ENCODE measurements at regions of chr14 and their contacts with region 1.

Region 1: GRCh38 chr14:25044106-25044698 is 5.7 kb downstream of the STXBP6 start:
- DNase-seq: no peak
- ATAC-seq: no peak
- H3K4me3 ChIP-seq: no peak overlapping the region
- H3K27ac ChIP-seq: no peak overlapping the region
- H3K4me1 ChIP-seq: no peaks in the 10 kb centered on the region
- H3K27me3 ChIP-seq: peaks cover 4% of the 10 kb centered on the region; the same call in 1 of the 2 replicates
- CTCF ChIP-seq: no peak

Region 2: GRCh38 chr14:23494223-23494622 is 1550.0 kb before region 1 on chr14:
- CTCF ChIA-PET with region 1: interaction called, 10 read pairs
- POLR2A ChIA-PET with region 1: no interaction called
- in situ Hi-C with region 1: no loop called
- intact Hi-C with region 1: no loop called
- DNase-seq: no peak
- ATAC-seq: no peak
- H3K4me3 ChIP-seq: no peak overlapping the region
- H3K27ac ChIP-seq: no peak overlapping the region
- H3K4me1 ChIP-seq: no peaks in the 10 kb centered on the region
- H3K27me3 ChIP-seq: no peaks in the 10 kb centered on the region
- CTCF ChIP-seq: no peak